ENCODE measurements at regions of chr2 and their contacts with region 1.

Region 1: GRCh38 chr2:44850016-44850415 is 91.5 kb upstream of the SIX3 start:
- DNase-seq: no peak
- H3K4me3 ChIP-seq: no peak overlapping the region
- H3K27ac ChIP-seq: no peak overlapping the region
- H3K4me1 ChIP-seq: no peaks in the 10 kb centered on the region
- H3K27me3 ChIP-seq: no peaks in the 10 kb centered on the region
- CTCF ChIP-seq: no peak
- EP300 ChIP-seq: no peak
- POLR2A ChIP-seq: no peak

Region 2: DNA sequence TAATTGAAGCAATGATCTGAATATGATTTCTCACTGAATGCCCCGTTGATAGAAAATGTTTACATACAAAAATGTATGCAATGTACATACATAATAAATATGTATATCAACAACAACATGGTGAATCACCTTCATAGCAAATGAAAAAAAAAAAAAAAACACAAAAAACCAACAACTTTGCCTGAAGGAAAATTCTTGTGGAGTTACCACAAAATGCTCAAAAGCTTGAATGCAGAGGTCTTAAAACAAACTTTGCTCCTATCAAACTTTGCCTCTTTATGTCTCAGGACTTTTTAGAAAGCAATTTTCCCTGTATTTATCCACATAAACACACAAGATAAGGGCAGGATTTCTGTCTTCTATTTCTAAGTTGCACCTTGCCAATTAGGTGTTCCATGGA is 252.1 kb after region 1 on chr2:
- intact Hi-C with region 1: loop called (anchors 10 kb)
- DNase-seq: no peak
- H3K4me3 ChIP-seq: no peak overlapping the region
- H3K27ac ChIP-seq: no peak overlapping the region
- H3K4me1 ChIP-seq: no peaks in the 10 kb centered on the region
- H3K27me3 ChIP-seq: no peaks in the 10 kb centered on the region
- CTCF ChIP-seq: no peak
- EP300 ChIP-seq: no peak
- POLR2A ChIP-seq: no peak

Measured in sigmoid colon (tissue), 7 donors.